Right ventricle myocardium superior (tissue), 1 donor: ENCODE measurements at regions of chr3 and their contacts with region 1.

Region 1: DNA sequence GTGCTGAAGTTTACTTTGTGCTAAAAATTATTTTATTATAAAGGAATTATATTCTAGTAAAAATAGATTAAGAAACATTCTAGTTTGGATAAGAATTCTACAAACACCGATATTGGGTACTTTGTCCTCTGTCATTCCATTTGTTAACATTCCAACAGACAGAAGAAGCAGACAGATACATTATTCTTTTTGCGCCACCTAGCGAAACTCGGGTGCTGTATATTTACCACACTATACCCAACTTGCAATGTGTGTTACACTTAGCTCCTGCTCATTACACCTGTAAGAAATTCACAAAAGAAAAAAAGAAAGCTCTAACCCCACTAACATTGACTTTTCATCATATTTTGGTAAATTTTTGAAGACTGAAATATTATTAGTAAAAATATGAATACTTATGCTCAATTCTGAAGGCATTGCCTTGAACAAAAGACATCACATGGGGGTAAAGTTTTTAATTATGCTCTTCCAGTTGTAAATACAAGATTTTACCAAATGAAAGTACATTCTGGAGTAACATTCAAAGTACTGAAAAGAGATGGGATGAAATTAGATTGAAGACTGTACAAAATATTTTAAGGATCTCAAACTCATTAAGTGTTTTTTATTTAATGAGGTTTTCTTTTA is 136.5 kb upstream of the MLF1 start:
- DNase-seq: peak; percentile 41
- ATAC-seq: peak; percentile 90

Region 2: DNA sequence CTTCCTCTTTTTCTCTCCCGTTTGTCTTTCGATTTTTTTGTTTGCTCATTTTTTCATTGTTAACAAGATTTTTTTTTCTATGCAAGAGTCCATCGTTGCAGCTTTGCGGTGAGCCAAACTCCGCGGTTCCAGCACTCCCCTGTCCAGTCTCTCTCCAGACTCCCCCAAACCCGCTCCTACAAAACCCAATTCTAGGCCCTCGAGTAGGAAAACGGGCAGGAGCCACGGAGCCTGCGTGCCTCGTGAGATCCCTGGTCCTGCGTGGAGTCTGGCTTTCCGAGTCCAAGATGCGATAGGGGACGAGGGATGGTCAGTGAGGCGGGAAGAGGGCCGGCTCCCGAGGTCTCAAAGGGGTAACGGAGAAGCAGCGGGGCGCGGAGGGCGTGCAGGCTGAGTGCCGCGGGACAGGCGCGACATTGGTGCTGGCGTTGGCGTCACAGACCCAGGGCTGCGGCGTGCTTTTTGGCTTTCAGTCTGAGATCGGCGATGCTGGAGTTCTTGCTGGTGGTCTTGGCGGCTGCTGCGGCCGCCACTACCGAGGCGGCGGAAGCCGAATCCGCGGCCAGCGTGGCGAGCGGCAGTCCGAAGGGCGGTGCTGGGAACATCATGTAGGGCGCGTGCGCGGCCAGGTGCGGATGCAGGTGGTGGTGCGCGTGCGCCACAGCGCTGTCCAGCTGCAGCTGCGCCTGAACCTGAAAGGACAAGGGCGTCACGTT is 336.8 kb before region 1 on chr3:
- intact Hi-C with region 1: loop called (anchors 10 kb)
- DNase-seq: peak; percentile 59
- ATAC-seq: peak; percentile 82

Region 3: GRCh38 chr3:158644345-158644908 is 209.9 kb after region 1 on chr3 and contains the start of gene GFM1:
- intact Hi-C with region 1: no loop called
- DNase-seq: peak; percentile 94
- ATAC-seq: peak; percentile 99
- total RNA-seq, gene GFM1: 60.1 TPM